ENCODE measurements at regions of chr2 and their contacts with region 1.

Region 1: DNA sequence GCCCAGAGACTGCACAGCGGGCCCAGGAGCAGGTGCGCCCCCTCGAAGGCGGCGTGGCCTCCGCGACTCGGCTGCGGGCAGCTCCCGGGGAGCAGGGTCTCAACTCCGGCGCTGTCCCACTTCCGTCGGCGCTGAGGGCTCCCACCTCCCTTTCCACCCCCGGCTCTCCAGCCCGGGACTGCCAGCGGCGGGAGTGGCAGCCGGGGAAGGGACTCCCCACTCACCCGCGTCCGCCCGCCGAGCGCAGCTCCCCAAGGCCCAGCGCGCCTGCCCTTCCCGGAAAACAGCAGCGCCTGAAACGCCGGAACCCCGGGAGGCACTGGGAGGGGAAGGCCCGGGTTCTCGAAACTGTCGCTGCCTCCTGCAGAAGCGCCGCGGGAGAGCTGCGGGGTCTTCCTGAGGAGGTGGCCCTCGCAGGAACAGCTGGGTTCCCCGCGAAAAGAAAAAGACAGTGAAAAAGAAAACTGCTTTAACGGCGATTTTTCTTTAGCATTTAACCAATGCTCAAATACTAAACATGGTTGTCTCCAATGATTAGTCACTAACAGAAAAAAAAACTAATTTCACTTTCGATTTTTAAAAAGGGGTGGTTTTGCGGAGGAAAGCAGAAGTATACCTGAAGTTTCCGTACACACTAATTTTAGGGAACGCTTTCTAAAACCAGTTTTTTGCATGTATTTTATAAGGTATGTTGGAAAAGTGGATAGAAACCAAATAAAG is at the start of gene NMI:
- DNase-seq: peak; percentile 28 to 64
- ATAC-seq: peak; percentile 86 to 91
- H3K4me3 ChIP-seq: peak within 1 kb of the TSS; percentile 60
- H3K27ac ChIP-seq: peak within 1 kb of the TSS; percentile 90 to 93
- H3K4me1 ChIP-seq: peaks cover 15% of the 10 kb centered on the region; the same call in 2 of the 3 replicates
- CTCF ChIP-seq: no peak
- EP300 ChIP-seq: no peak
- POLR2A ChIP-seq: peak; percentile 51
- RAD21 ChIP-seq: no peak
- polyA plus RNA-seq, gene NMI: 9.7 and 15.4 TPM in 2 replicates

Region 2: DNA sequence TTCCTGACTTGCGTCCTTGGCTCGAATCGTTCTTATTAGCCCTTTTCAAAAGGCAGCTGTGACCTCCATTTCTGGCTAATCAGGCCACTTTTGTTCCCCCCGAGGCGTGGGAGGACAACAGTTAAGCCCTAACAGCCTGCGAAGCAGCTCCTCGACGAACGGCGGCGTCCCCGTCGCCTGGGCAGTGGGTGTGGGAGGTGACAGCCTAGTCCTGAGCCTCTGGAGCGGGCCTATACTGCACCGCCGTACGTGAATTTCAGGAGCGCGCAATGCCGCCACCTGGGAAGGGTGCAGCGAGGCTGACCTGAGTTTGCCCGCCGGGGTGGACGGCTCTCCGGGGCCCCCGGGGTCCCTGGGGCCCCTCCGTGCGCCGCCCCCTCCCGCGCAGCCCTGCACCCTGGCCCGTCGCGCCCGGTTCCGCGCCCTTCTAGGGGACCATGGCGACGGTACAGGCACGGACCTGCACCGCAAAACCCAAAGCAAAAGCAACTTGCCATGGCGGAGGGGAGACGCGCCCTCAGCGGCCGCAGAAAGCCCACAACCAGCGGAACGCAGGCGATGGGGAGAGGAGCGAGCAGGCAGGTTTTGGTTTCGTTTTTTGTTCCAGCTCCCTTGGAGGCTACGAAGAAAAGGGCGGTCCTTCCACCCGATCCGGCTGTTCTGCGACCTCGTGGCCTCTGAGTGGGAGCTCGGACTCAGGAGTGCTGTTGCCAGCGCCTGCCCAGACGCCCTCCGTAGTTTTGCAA is 28.1 kb before region 1 on chr2 and contains the start of gene RBM43:
- CTCF ChIA-PET with region 1: interaction called, 4 read pairs
- POLR2A ChIA-PET with region 1: interaction called, 19 read pairs
- DNase-seq: peak; percentile 85 to 89
- ATAC-seq: peak; percentile 92 to 93
- H3K4me3 ChIP-seq: peak within 1 kb of the TSS; percentile 62
- H3K27ac ChIP-seq: peak within 1 kb of the TSS; percentile 93 to 97
- H3K4me1 ChIP-seq: 0 out of 3 replicates have a peak, but pooled peaks cover 7% of the 10 kb centered on the region
- CTCF ChIP-seq: peak; percentile 14; the same call in 1 of the 3 replicates
- EP300 ChIP-seq: no peak
- POLR2A ChIP-seq: peak; percentile 59
- RAD21 ChIP-seq: peak in 1 of 2 experiments; percentile 23; a peak in 2 of 5 replicates
- polyA plus RNA-seq, gene RBM43: 7.3 and 9.3 TPM in 2 replicates

Measured in A549 (cell line).